Mammary epithelial cell (primary cell): ENCODE measurements at regions of chr11 and their contacts with region 1.

Region 1: GRCh38 chr11:61509043-61510029 is 787 bp downstream of the LRRC10B start:
- DNase-seq: peak; percentile 84
- H3K4me3 ChIP-seq: peak overlapping the region in 2 of 3 experiments; percentile 19 to 35
- H3K27ac ChIP-seq: no peak overlapping the region
- H3K4me1 ChIP-seq: peaks cover 11% of the 10 kb centered on the region
- H3K27me3 ChIP-seq: peaks cover 11% of the 10 kb centered on the region
- CTCF ChIP-seq: peak; percentile 24 to 52

Region 2: DNA sequence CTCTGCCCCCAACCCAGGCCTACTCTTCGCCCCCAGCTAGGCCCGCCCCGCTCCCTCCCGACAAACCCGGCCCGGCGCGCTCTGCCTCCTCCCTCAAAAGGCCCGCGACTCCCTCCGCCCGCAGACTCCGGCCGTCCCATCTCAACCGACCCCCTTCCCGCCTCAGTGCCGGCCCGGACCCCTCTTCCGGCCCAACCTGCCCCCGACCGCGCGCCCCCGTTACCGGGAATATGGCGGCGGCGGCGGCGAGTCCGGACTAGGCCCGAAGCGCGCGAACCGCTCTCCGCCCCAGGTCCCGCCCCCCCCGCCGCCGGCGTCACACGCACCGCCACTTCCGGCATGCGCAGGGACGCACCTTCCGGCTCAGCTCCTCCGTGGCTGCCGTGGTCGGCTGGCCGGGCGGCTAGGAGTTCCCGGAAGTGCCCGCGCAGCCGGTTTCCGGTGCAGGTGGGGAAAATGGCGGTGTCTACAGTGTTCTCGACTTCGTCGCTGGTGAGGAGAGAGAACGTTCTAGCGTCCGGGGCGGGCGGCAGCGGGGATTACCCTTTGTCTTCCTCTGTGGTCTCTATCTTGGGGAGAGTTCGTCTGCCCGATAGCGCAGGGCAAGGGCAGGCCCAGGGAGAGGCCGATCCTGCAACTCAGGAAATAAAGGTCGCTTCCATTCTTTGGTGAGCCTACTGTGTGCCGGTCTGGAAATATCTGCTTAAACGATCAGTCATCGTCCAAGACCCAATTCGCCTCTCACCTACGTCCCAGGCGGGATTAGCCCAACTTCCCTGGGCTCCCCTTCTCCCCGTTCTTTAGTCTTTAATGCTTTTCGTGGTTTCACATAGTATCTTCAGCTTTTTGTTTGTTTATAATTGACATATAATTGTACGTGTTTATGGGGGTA is 79.4 kb before region 1 on chr11 and contains the starts of genes CPSF7 and SDHAF2:
- CTCF ChIA-PET with region 1: no interaction called
- dilution Hi-C with region 1: no loop called
- in situ Hi-C with region 1: no loop called
- intact Hi-C with region 1: no loop called
- DNase-seq: peak; percentile 96
- H3K4me3 ChIP-seq: peak within 1 kb of the TSS; percentile 58 to 93 (median 78)
- H3K27ac ChIP-seq: peak within 1 kb of the TSS; percentile 77
- H3K4me1 ChIP-seq: peaks cover 23% of the 10 kb centered on the region
- H3K27me3 ChIP-seq: no peaks in the 10 kb centered on the region
- CTCF ChIP-seq: no peak
- total RNA-seq, gene CPSF7: 27.2 to 77.7 TPM
- total RNA-seq, gene SDHAF2: 21.7 to 48.2 TPM

Region 3: GRCh38 chr11:61453695-61454094 is 55.6 kb before region 1 on chr11:
- CTCF ChIA-PET with region 1: no interaction called
- dilution Hi-C with region 1: loop called (anchors 5 kb)
- in situ Hi-C with region 1: no loop called
- intact Hi-C with region 1: no loop called
- DNase-seq: no peak
- H3K4me3 ChIP-seq: no peak overlapping the region
- H3K27ac ChIP-seq: no peak overlapping the region
- H3K4me1 ChIP-seq: no peaks in the 10 kb centered on the region
- H3K27me3 ChIP-seq: no peaks in the 10 kb centered on the region
- CTCF ChIP-seq: no peak

Region 4: GRCh38 chr11:61494381-61494961 is 14.9 kb before region 1 on chr11:
- CTCF ChIA-PET with region 1: interaction called, 13 read pairs
- dilution Hi-C with region 1: no loop called
- in situ Hi-C with region 1: no loop called
- intact Hi-C with region 1: no loop called
- DNase-seq: no peak
- H3K4me3 ChIP-seq: no peak overlapping the region
- H3K27ac ChIP-seq: no peak overlapping the region
- H3K4me1 ChIP-seq: peaks cover 14% of the 10 kb centered on the region
- H3K27me3 ChIP-seq: no peaks in the 10 kb centered on the region
- CTCF ChIP-seq: no peak

Region 5: DNA sequence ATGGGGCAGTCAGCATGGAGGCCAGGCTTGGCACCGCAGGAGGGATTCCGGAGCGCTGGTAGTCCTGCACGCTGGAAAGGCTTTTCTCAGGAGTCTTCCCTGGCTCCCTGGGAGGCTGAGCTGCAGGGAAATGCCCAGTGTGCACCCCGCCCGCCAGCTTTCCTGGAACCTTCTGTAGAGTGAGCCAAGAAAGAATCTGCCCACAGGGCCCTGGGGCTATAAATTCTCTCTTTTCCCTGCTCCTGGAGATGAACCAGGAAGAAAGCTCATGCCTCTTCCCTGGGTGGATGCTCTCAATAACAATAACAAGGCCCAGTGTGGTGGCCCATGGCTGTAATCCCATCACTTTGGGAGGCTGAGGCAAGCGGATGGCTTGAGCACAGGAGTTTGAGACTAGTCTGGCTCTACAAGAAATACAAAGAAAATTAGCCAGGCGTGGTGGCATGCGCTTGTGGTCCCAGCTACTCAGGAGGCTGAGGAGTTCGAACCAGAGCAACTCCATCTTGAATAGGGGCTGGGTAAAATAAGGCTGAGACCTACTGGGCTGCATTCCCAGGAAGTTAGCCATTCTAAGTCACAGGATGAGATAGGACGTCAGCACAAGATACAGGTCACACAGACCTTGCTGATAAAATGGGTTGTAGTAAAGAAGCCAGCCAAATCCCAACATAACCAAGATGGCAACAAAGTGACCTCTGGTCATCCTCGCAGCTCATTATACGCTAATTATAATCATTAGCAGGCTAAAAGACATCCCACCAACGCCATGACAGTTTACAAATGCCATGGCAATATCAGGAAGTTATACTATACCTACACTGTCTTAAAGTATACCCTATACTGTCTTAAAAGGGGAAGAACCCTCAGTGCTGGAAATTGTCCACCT is 504.5 kb after region 1 on chr11:
- CTCF ChIA-PET with region 1: interaction called, 12 read pairs
- dilution Hi-C with region 1: no loop called
- in situ Hi-C with region 1: no loop called
- intact Hi-C with region 1: no loop called
- DNase-seq: peak; percentile 65
- H3K4me3 ChIP-seq: peak overlapping the region in 1 of 3 experiments; percentile 21
- H3K27ac ChIP-seq: no peak overlapping the region
- H3K4me1 ChIP-seq: peaks cover 21% of the 10 kb centered on the region
- H3K27me3 ChIP-seq: no peaks in the 10 kb centered on the region
- CTCF ChIP-seq: no peak